ENCODE measurements at regions of chr12 and their contacts with region 1.

Region 1: GRCh38 chr12:56007564-56008559 is 10.8 kb downstream of the SUOX start:
- DNase-seq: peak; percentile 61
- H3K27ac ChIP-seq: peak overlapping the region; percentile 92
- CTCF ChIP-seq: no peak

Region 2: GRCh38 chr12:55037351-55037987 is 970.4 kb before region 1 on chr12:
- CTCF ChIA-PET with region 1: no interaction called
- POLR2A ChIA-PET with region 1: no interaction called
- DNase-seq: no peak
- H3K27ac ChIP-seq: no peak overlapping the region
- CTCF ChIP-seq: no peak

Region 3: DNA sequence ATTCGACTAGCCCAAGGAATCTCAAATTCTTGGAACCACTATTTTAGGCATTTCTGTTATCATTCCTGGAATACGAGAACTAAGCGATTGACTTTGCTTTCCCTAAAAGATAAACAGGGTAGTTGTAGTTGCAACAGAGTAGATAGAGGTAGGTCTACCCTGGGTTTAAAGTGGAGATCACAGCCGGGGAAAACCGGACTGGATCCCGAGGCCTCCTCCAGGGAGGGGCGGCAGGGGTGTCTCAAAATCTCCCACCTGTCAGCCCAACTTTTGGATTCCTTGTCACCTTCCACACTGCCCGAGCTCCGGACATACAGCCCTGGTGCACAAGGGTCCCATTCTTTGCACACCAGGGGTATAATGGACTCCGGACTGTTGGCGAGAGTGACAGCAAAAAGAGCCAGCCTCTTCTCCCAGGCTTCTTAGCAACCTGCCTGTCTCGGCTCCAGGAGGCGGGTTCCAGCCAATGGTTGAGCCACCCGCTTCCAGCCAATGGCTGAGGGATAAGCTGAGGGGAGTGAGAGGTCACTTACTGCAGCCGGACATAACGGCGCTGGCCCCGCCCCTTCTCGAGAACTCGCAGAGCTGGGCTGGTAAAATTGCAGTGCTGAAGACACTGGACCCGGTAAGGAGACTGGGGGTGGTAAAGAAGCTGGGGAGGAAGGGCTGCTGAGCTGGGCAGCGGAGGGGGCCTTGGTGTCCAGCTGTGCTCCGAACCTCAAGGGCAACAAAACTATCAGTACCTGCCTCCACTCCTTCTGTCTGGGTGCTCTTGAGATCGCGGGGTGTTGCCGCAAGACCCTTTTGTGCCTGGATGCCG is 10.9 kb before region 1 on chr12 and contains the start of gene SUOX:
- CTCF ChIA-PET with region 1: interaction called, 10 read pairs
- POLR2A ChIA-PET with region 1: interaction called, 4 read pairs
- DNase-seq: peak; percentile 98
- H3K27ac ChIP-seq: peak within 1 kb of the TSS; percentile 83
- CTCF ChIP-seq: no peak

Region 4: GRCh38 chr12:56086076-56086475 is 78.2 kb after region 1 on chr12:
- CTCF ChIA-PET with region 1: no interaction called
- POLR2A ChIA-PET with region 1: interaction called, 12 read pairs
- DNase-seq: peak; percentile 55
- H3K27ac ChIP-seq: no peak overlapping the region
- CTCF ChIP-seq: no peak